IMR-90 (cell line): ENCODE measurements at regions of chr3 and their contacts with region 1.

Region 1: GRCh38 chr3:58824285-58824684 is 157.7 kb upstream of the FAM3D start:
- DNase-seq: peak; percentile 73
- ATAC-seq: peak; percentile 89
- H3K4me3 ChIP-seq: no peak overlapping the region
- H3K27ac ChIP-seq: no peak overlapping the region
- H3K4me1 ChIP-seq: no peaks in the 10 kb centered on the region
- H3K27me3 ChIP-seq: no peaks in the 10 kb centered on the region
- CTCF ChIP-seq: peak; percentile 89
- POLR2A ChIP-seq: no peak
- RAD21 ChIP-seq: peak; percentile 93

Region 2: DNA sequence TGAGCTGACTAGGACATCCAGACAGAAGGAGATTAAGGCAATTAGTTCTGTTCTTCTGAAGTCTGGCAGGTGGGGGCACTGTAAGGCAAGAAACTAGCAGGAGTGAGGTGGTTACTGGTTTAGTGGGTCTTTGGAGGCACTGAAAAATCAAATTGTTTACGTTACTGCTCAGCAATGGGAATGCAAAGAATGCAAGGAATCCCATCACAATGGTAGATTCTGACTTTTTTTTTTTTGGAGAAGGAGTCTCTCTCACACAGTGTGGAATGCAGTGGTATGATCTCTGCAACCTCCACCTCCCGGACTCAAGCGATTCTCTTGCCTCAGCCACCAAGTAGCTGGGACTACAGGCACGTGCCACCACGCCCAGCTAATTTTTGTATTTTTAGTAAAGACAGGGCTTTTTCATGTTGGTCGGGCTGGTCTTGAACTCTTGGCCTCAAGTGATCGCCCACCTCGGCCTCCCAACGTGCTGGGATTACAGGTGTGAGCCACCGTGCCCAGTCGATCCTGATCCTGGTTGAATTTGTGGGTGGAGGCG is 263.4 kb before region 1 on chr3:
- CTCF ChIA-PET with region 1: no interaction called
- POLR2A ChIA-PET with region 1: no interaction called
- dilution Hi-C with region 1: no loop called
- in situ Hi-C with region 1: no loop called
- intact Hi-C with region 1: loop called (anchors 5 kb)
- DNase-seq: peak; percentile 98
- ATAC-seq: peak; percentile 91
- H3K4me3 ChIP-seq: no peak overlapping the region
- H3K27ac ChIP-seq: peak overlapping the region; percentile 81
- H3K4me1 ChIP-seq: peaks cover 4% of the 10 kb centered on the region; the same call in 1 of the 2 replicates
- H3K27me3 ChIP-seq: no peaks in the 10 kb centered on the region
- CTCF ChIP-seq: peak; percentile 88
- POLR2A ChIP-seq: no peak; the same call in 1 of the 2 replicates
- RAD21 ChIP-seq: peak; percentile 90

Region 3: GRCh38 chr3:58899159-58899952 is 75.1 kb after region 1 on chr3:
- CTCF ChIA-PET with region 1: no interaction called
- POLR2A ChIA-PET with region 1: no interaction called
- dilution Hi-C with region 1: no loop called
- in situ Hi-C with region 1: no loop called
- intact Hi-C with region 1: no loop called
- DNase-seq: no peak
- ATAC-seq: peak; percentile 14; the same call in 1 of the 2 replicates
- H3K4me3 ChIP-seq: no peak overlapping the region
- H3K27ac ChIP-seq: no peak overlapping the region
- H3K4me1 ChIP-seq: no peaks in the 10 kb centered on the region
- H3K27me3 ChIP-seq: no peaks in the 10 kb centered on the region
- CTCF ChIP-seq: no peak
- POLR2A ChIP-seq: no peak
- RAD21 ChIP-seq: no peak

Region 4: GRCh38 chr3:58965865-58966264 is 141.6 kb after region 1 on chr3:
- CTCF ChIA-PET with region 1: no interaction called
- POLR2A ChIA-PET with region 1: no interaction called
- dilution Hi-C with region 1: no loop called
- in situ Hi-C with region 1: no loop called
- intact Hi-C with region 1: loop called (anchors 5 kb)
- DNase-seq: peak; percentile 71
- ATAC-seq: peak; percentile 53
- H3K4me3 ChIP-seq: no peak overlapping the region
- H3K27ac ChIP-seq: peak overlapping the region; percentile 98
- H3K4me1 ChIP-seq: peaks cover 19% of the 10 kb centered on the region
- H3K27me3 ChIP-seq: no peaks in the 10 kb centered on the region
- CTCF ChIP-seq: no peak
- POLR2A ChIP-seq: no peak
- RAD21 ChIP-seq: no peak

Region 5: GRCh38 chr3:59006634-59007517 is 182.6 kb after region 1 on chr3:
- CTCF ChIA-PET with region 1: no interaction called
- POLR2A ChIA-PET with region 1: no interaction called
- dilution Hi-C with region 1: no loop called
- in situ Hi-C with region 1: no loop called
- intact Hi-C with region 1: no loop called
- DNase-seq: peak; percentile 76
- ATAC-seq: peak; percentile 89
- H3K4me3 ChIP-seq: no peak overlapping the region
- H3K27ac ChIP-seq: no peak overlapping the region
- H3K4me1 ChIP-seq: peaks cover 3% of the 10 kb centered on the region; the same call in 1 of the 2 replicates
- H3K27me3 ChIP-seq: no peaks in the 10 kb centered on the region
- CTCF ChIP-seq: no peak
- POLR2A ChIP-seq: no peak
- RAD21 ChIP-seq: no peak

Region 6: DNA sequence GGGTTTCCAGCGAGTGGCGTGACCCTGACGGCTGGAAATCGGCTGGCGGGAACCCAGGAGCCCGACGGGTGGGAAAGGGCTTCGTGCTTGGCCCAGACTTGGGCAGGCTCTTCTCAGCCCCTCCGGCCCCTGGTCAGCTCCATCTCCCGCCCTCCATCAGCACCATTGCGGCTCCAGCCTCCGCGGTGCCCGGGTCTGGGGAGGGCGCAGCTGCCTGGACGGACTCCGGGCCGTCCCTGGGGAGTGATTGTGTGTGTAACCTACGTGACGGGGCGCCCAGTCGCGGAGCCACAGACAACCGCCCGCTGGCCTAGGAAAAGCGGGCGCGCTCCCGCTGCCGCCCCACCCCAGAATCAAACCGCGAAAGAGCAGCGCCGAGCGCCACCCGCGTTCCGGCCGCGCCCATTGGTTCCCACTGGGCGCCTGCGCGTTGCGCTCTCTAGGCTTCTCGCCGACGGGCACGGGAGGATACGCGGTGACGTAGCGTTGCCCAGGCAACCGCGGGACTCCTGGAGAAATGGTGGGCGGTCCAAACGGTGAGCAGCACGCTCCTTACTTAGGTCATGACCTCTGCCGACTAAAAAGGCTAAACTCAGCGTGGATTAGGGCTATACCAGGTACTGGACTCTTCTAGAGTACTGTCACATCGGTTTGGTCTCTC is 225.5 kb after region 1 on chr3 and contains the start of gene CFAP20DC:
- CTCF ChIA-PET with region 1: interaction called, 23 read pairs
- POLR2A ChIA-PET with region 1: no interaction called
- dilution Hi-C with region 1: no loop called
- in situ Hi-C with region 1: loop called (anchors 10 kb)
- intact Hi-C with region 1: loop called (anchors 1 kb)
- DNase-seq: peak; percentile 89
- ATAC-seq: peak; percentile 100
- H3K4me3 ChIP-seq: peak within 1 kb of the TSS; percentile 88
- H3K27ac ChIP-seq: peak within 1 kb of the TSS; percentile 81
- H3K4me1 ChIP-seq: 0 out of 2 replicates have a peak, but pooled peaks cover 2% of the 10 kb centered on the region
- H3K27me3 ChIP-seq: no peaks in the 10 kb centered on the region
- CTCF ChIP-seq: no peak
- POLR2A ChIP-seq: peak; percentile 85
- RAD21 ChIP-seq: no peak
- total RNA-seq, gene CFAP20DC: 1.6 and 2.8 TPM in 2 replicates

Region 7: GRCh38 chr3:59192473-59192872 is 368.2 kb after region 1 on chr3:
- CTCF ChIA-PET with region 1: no interaction called
- POLR2A ChIA-PET with region 1: no interaction called
- dilution Hi-C with region 1: no loop called
- in situ Hi-C with region 1: no loop called
- intact Hi-C with region 1: loop called (anchors 1 kb)
- DNase-seq: peak; percentile 87
- ATAC-seq: peak; percentile 76
- H3K4me3 ChIP-seq: no peak overlapping the region
- H3K27ac ChIP-seq: no peak overlapping the region
- H3K4me1 ChIP-seq: peaks cover 2% of the 10 kb centered on the region; the same call in 1 of the 2 replicates
- H3K27me3 ChIP-seq: no peaks in the 10 kb centered on the region
- CTCF ChIP-seq: no peak
- POLR2A ChIP-seq: no peak
- RAD21 ChIP-seq: no peak

Region 8: DNA sequence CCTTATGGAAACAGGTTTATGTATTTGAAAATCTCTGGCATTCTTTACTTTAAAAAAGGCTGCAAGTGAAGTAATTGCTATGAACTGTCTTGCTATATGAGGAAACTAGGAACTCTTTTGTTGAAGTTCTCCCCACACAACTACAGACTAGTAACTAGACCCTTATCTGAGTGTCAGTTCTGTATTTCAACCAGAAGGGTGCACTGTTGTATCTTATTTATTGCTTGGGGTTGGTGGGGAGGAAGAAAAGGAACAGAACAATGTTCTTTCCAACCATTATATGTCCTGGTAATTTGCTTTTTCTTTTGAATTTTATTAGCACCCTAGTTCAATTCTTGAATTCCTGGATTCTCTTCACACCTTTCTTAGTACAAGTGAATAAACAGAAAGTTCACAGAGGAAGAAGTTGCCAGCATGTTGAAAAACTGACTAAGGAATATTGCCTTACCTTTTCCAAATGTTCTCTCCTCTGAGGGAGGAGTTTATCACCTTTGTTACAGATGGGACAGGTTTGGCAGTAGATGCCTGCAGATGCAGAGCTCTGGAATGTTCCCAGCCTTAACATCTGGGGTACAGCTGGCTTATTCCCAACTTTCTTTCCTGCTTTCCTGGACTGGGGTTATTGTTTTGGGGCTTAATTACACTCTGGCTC is 388.0 kb after region 1 on chr3:
- CTCF ChIA-PET with region 1: no interaction called
- POLR2A ChIA-PET with region 1: no interaction called
- dilution Hi-C with region 1: no loop called
- in situ Hi-C with region 1: no loop called
- intact Hi-C with region 1: loop called (anchors 5 kb)
- DNase-seq: peak; percentile 60
- ATAC-seq: peak; percentile 97
- H3K4me3 ChIP-seq: no peak overlapping the region
- H3K27ac ChIP-seq: no peak overlapping the region
- H3K4me1 ChIP-seq: no peaks in the 10 kb centered on the region; the same call in 1 of the 2 replicates
- H3K27me3 ChIP-seq: no peaks in the 10 kb centered on the region
- CTCF ChIP-seq: peak; percentile 78
- POLR2A ChIP-seq: no peak
- RAD21 ChIP-seq: peak; percentile 85

Region 9: GRCh38 chr3:59559721-59560435 is 735.6 kb after region 1 on chr3:
- CTCF ChIA-PET with region 1: no interaction called
- POLR2A ChIA-PET with region 1: no interaction called
- dilution Hi-C with region 1: no loop called
- in situ Hi-C with region 1: no loop called
- intact Hi-C with region 1: loop called (anchors 5 kb)
- DNase-seq: peak; percentile 97
- ATAC-seq: peak; percentile 90
- H3K4me3 ChIP-seq: no peak overlapping the region
- H3K27ac ChIP-seq: no peak overlapping the region
- H3K4me1 ChIP-seq: peaks cover 13% of the 10 kb centered on the region
- H3K27me3 ChIP-seq: no peaks in the 10 kb centered on the region
- CTCF ChIP-seq: no peak
- POLR2A ChIP-seq: no peak
- RAD21 ChIP-seq: no peak